ENCODE measurements at regions of chr5 and their contacts with region 1.

Region 1: DNA sequence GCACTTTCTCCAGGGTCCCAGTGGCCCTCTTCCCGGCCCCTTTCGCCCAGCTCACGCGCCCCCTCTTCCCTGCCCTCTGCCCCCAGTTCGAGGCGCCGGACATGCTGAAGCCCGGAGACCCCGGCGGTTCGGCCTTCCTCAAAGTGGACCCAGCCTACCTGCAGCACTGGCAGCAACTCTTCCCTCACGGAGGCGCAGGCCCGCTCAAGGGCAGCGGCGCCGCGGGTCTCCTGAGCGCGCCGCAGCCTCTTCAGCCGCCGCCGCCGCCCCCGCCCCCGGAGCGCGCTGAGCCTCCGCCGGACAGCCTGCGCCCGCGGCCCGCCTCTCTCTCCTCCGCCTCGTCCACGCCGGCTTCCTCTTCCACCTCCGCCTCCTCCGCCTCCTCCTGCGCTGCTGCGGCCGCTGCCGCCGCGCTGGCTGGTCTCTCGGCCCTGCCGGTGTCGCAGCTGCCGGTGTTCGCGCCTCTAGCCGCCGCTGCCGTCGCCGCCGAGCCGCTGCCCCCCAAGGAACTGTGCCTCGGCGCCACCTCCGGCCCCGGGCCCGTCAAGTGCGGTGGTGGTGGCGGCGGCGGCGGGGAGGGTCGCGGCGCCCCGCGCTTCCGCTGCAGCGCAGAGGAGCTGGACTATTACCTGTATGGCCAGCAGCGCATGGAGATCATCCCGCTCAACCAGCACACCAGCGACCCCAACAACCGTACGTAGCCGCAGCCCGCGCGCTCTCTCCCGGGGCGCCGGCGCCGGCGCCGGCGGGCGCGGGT is 1.1 kb downstream of the PRDM6 start:
- DNase-seq: no peak
- H3K4me3 ChIP-seq: peak overlapping the region; percentile 43
- H3K27ac ChIP-seq: no peak overlapping the region
- H3K27me3 ChIP-seq: peaks cover 85% of the 10 kb centered on the region
- CTCF ChIP-seq: no peak

Region 2: DNA sequence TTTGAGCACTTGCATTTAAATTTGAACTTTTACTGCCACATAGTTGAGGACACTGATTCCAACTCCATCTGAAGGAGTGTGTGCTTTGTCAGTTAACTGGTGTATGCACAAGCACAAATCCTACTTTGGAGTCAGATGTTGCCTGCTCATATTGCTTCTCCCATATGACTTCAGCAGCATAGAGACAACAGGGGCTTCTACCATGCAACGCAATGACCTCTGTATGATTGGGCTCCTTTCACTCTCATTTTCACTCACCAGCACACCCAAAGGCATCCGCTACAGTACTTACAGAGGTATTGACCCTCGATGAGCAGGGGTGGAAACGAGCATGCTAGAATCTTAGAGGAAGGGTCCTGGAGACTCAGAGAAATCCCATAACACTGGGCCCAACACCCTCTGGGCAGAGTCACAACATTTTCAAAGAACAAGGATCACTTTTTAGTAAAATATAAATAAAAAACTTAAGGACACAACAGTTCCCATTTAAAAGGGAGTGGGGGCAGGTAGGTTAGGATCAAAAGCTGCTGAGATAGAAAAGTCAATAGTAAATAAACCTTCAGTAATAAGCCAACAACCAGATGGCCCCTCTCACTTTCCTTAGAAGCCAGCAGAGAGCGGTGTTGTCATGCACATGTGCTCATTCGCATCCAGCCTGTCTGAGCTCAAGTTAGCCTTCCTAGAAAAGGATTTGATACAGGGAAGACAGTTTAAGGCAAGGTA is 574.2 kb before region 1 on chr5:
- in situ Hi-C with region 1: loop called (anchors 25 kb)
- DNase-seq: peak; percentile 69
- H3K4me3 ChIP-seq: no peak overlapping the region
- H3K27ac ChIP-seq: no peak overlapping the region
- H3K27me3 ChIP-seq: no peaks in the 10 kb centered on the region
- CTCF ChIP-seq: peak; percentile 88

Measured in brain microvascular endothelial cell (primary cell).